ENCODE measurements at regions of chr18 and their contacts with region 1.

Region 1: GRCh38 chr18:3151399-3152264 is 68.1 kb downstream of the MYOM1 start:
- H3K4me3 ChIP-seq: no peak overlapping the region
- H3K27ac ChIP-seq: no peak overlapping the region
- H3K4me1 ChIP-seq: 0 out of 2 replicates have a peak, but pooled peaks cover 6% of the 10 kb centered on the region
- CTCF ChIP-seq: no peak

Region 2: DNA sequence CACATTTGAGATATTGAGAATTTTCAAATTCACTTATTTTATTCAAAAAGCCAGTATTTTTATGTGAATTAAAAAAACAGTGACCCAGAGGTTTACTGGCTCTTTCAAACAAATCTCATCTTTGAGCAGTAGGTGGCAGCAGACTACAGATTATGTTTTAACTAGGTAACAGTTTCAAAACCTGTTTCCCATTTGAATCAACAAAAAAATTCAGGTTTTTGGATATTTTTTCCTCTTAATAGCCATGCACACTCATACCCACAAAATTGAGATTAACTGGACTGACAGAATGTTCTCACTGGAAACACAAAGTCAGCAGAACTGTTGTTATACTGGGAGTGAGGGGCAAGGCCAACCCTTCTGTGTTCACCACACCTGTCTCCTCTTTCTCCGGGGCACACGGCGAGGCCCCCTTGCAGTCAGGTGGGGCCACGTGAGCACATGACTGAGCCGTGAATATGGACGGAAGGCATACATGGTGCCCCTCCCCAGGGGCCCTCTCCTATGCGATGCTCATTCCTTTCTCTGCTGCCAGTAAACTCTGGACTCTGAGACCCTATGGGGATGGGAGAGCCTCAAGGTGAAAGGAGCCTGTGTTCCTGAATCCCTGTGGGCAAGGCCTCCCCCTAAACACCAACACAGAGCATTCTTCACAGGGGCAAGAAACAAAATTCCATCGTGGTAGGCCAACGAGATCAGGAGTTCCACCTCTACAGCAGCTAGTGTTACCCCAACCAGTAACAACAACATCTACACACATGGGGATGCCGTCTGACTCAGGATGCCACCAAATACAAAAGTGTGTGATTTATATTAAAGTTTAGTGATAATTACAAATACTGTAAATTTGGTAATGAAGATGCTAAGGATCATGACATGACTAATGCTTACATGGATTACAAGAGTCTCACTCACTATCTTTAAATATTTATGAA is 219.1 kb before region 1 on chr18:
- CTCF ChIA-PET with region 1: interaction called, 20 read pairs
- POLR2A ChIA-PET with region 1: no interaction called
- H3K4me3 ChIP-seq: no peak overlapping the region
- H3K27ac ChIP-seq: no peak overlapping the region
- H3K4me1 ChIP-seq: no peaks in the 10 kb centered on the region
- CTCF ChIP-seq: peak; percentile 33; the same call in 1 of the 2 replicates

Region 3: DNA sequence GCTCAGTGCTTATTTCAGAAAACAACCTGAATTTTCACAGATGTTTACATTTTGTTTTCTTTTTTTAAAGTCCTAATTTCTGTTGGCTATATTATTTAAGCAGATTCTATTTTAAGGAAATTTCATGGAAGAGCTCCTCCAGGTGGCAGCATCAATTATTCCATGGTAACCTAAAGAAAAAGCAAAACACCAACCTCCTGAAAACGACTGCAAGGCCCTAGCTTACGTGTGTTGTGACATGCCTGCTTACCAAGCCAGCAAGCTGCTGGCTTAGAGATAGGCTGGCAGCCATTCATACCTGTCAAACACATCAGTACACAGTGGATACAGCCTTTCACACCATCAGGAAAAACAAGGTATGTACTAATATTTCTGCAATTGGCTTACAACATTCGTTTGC is 203.6 kb before region 1 on chr18:
- CTCF ChIA-PET with region 1: interaction called, 11 read pairs
- POLR2A ChIA-PET with region 1: no interaction called
- H3K4me3 ChIP-seq: no peak overlapping the region
- H3K27ac ChIP-seq: no peak overlapping the region
- H3K4me1 ChIP-seq: no peaks in the 10 kb centered on the region
- CTCF ChIP-seq: 0 out of 2 replicates have a peak, but pooled peaks have one; percentile 18

Region 4: GRCh38 chr18:3140986-3141639 is 10.5 kb before region 1 on chr18:
- CTCF ChIA-PET with region 1: interaction called, 13 read pairs
- POLR2A ChIA-PET with region 1: no interaction called
- H3K4me3 ChIP-seq: no peak overlapping the region
- H3K27ac ChIP-seq: no peak overlapping the region
- H3K4me1 ChIP-seq: no peaks in the 10 kb centered on the region
- CTCF ChIP-seq: no peak

Region 5: DNA sequence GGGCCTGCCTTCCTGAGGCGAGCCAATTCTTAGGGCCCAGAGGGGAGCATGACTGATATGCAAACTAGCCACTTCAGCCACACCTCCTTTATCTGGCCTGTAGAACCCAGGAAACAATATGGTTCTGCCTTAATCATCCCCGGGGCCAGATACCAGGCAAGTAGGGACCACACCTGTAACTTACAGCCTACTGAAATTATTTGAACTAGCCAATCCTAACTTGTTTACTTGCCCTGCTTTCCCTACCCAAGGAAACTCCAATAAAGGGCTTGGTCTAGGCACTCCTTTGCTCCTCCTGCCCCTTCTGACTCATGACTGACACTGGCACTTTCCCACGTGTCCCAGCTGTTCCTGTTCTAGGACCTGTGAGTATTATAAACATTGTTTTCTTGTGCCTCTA is 10.5 kb after region 1 on chr18:
- CTCF ChIA-PET with region 1: interaction called, 10 read pairs
- POLR2A ChIA-PET with region 1: no interaction called
- H3K4me3 ChIP-seq: no peak overlapping the region
- H3K27ac ChIP-seq: no peak overlapping the region
- H3K4me1 ChIP-seq: no peaks in the 10 kb centered on the region
- CTCF ChIP-seq: no peak

Region 6: GRCh38 chr18:3472681-3473544 is 321.3 kb after region 1 on chr18:
- CTCF ChIA-PET with region 1: no interaction called
- POLR2A ChIA-PET with region 1: no interaction called
- H3K4me3 ChIP-seq: no peak overlapping the region
- H3K27ac ChIP-seq: no peak overlapping the region
- H3K4me1 ChIP-seq: no peaks in the 10 kb centered on the region
- CTCF ChIP-seq: no peak

Measured in HEK293 (cell line).